PC-9 (cell line): ENCODE measurements at regions of chr10 and their contacts with region 1.

Region 1: DNA sequence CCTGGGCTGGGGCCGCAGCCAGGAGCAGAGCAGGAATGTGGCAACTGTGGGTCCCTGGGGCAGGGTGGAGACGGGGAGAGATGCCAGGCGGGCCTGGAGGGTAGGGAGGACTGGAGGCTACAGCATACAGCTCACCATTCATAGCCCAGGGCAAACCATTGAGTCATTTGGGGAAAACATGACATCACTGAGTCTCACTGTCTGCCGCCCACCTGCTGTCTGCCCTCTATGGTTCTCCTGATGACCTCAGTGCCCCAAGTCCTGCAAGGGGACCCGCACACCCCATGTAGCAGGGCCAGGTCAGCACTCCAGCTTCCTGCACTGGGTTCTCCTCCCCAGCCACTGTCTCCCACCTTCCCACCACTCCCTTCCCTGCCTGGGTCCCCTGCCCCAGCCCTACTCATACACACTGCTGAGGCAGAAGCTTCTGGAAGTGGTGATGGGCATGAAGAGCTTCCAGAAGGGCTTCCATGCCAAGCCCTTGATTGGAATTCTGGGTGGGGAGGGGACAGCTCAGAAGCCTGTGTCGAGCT is 10.4 kb downstream of the CHST3 start:
- DNase-seq: peak; percentile 69 to 91
- H3K4me3 ChIP-seq: no peak overlapping the region
- H3K27ac ChIP-seq: peak overlapping the region; percentile 56
- H3K4me1 ChIP-seq: peaks cover 37% of the 10 kb centered on the region
- H3K27me3 ChIP-seq: no peaks in the 10 kb centered on the region
- CTCF ChIP-seq: no peak

Region 2: DNA sequence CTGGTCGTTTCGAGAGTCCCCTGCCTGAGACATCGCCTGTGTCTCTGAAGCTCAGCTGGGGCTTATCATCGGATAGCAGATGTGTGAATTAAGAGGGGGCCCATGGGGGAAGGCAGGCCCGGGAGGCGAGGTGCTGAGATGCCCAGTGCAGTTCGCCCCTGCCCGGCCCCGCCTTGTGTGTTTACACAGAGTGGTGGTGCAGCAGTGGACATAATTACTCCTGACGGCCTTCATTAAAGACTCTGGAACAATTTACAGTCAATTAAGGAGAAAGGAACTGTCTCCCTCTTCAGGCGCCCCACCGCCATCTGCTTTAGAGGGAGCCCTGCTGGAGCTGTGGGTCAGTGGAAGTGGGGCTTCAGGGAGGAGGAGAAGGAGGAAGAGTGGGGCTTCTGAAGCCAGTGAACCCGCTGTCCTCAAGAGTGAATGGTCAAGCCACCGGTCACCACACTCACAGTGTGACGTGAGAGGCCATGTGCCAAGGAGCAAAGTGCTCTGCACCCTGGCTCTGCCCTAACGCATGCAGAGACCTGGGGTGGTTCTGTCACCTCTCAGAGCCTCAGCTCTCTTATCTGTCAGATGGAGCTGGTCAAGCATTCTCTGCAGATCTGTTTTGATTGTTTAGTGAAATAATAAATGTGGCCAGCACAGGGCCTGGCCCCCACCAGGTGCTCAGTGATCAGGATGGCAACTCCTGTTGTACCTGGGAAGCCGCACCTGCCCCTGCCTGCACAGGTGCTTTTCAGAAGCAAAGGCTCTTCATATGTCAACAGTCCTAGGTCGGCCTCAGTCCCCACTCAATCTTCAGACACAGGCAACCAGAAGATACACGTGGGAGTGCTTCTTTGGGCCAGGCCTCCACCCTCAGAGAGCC is 512.3 kb before region 1 on chr10:
- CTCF ChIA-PET with region 1: no interaction called
- POLR2A ChIA-PET with region 1: no interaction called
- intact Hi-C with region 1: no loop called
- DNase-seq: no peak
- H3K4me3 ChIP-seq: no peak overlapping the region
- H3K27ac ChIP-seq: no peak overlapping the region
- H3K4me1 ChIP-seq: no peaks in the 10 kb centered on the region
- H3K27me3 ChIP-seq: no peaks in the 10 kb centered on the region
- CTCF ChIP-seq: no peak

Region 3: GRCh38 chr10:72016608-72017312 is 42.2 kb after region 1 on chr10:
- CTCF ChIA-PET with region 1: no interaction called
- POLR2A ChIA-PET with region 1: interaction called, 13 read pairs
- intact Hi-C with region 1: no loop called
- DNase-seq: no peak
- H3K4me3 ChIP-seq: no peak overlapping the region
- H3K27ac ChIP-seq: no peak overlapping the region
- H3K4me1 ChIP-seq: 0 out of 2 replicates have a peak, but pooled peaks cover 6% of the 10 kb centered on the region
- H3K27me3 ChIP-seq: no peaks in the 10 kb centered on the region
- CTCF ChIP-seq: no peak

Region 4: GRCh38 chr10:72026278-72027111 is 51.9 kb after region 1 on chr10:
- CTCF ChIA-PET with region 1: no interaction called
- POLR2A ChIA-PET with region 1: no interaction called
- intact Hi-C with region 1: loop called (anchors 1 kb)
- DNase-seq: peak in 1 of 2 experiments; percentile 26
- H3K4me3 ChIP-seq: no peak overlapping the region
- H3K27ac ChIP-seq: no peak overlapping the region
- H3K4me1 ChIP-seq: peaks cover 20% of the 10 kb centered on the region
- H3K27me3 ChIP-seq: no peaks in the 10 kb centered on the region
- CTCF ChIP-seq: no peak